Naive thymus-derived CD8-positive, alpha-beta T cell (primary cell): ENCODE measurements at regions of chr1 and their contacts with region 1.

Region 1: GRCh38 chr1:36397378-36398230 is at the start of gene LSM10:
- DNase-seq: peak; percentile 80 to 92 (median 85)
- ATAC-seq: peak; percentile 90 to 96
- H3K4me3 Mint-ChIP-seq: peak within 1 kb of the TSS; percentile 89 to 100 (median 98)
- H3K27ac Mint-ChIP-seq: peak within 1 kb of the TSS; percentile 94 to 100 (median 99)
- H3K4me1 Mint-ChIP-seq: peaks cover 17 to 58% (median 41%) of the 10 kb centered on the region in 4 donors
- H3K27me3 Mint-ChIP-seq: no peaks in the 10 kb centered on the region
- polyA plus RNA-seq, gene LSM10: 118 to 122 (median 121) TPM

Region 2: GRCh38 chr1:36385410-36386257 is 12.0 kb before region 1 on chr1 and contains the start of gene STK40:
- POLR2A ChIA-PET with region 1: interaction called, 59 read pairs
- DNase-seq: peak; percentile 90 to 99 (median 98)
- ATAC-seq: peak; percentile 90 to 93
- H3K4me3 Mint-ChIP-seq: peak within 1 kb of the TSS; percentile 80 to 96 (median 92)
- H3K27ac Mint-ChIP-seq: peak within 1 kb of the TSS; percentile 95 to 98 (median 96)
- H3K4me1 Mint-ChIP-seq: peaks cover 35 to 78% (median 56%) of the 10 kb centered on the region in 4 donors
- H3K27me3 Mint-ChIP-seq: no peaks in the 10 kb centered on the region
- polyA plus RNA-seq, gene STK40: 21.6 to 31.7 (median 23.6) TPM